Motor neuron (in vitro differentiated cells): ENCODE measurements at regions of chr12 and their contacts with region 1.

Region 1: DNA sequence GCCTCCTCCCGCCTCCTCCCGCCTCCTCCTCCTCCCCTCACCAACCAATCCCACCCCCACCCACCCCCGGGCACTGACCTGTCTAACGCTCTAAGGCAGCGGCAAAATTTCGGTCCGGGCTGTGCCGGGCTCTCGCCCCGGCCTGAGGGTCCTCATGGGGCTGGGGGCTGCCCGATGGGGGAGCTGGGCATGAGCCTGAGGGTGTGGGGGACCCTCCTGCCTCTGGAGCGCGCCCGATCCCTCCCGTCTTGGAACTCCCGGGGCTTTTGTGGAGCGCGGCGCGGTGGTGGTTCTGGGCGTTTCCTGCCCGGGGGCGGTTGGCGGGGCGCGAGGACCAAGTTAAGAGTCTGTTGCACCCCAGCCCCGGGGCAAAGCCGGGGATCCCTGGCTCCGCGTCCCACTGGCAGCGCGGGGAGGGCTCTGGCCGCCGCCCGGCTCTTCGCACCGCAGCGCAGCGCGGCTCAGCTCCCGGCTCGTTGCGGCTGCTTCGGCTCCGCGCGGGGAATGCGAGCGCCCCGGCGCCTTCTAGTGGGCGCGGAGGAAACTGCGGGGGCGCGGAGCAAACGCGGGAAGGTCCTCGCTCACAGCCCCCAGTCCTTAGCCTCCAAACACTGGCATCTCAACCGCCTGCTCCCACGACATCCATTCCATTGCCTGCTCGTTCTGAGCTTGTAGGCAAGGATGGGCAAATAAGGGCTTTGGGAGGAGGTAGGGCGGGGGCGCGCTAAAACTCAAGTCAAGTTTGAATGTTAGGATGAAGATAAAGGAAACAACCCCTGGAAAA is at the start of gene B4GALNT1:
- ATAC-seq: peak; percentile 79 to 91 (median 82)
- H3K4me3 ChIP-seq: peak within 1 kb of the TSS; percentile 48 to 83 (median 74)
- H3K27ac ChIP-seq: peak within 1 kb of the TSS; percentile 69 to 83
- H3K4me1 ChIP-seq: peaks cover 10 to 14% of the 10 kb centered on the region in 2 donors
- total RNA-seq, gene B4GALNT1: 0.61 to 34.3 (median 19.4) TPM

Region 2: GRCh38 chr12:57693659-57694458 is 61.0 kb after region 1 on chr12 and contains the start of gene OS9:
- in situ Hi-C with region 1: loop called in 1 of 9 experiments (anchors 10 kb)
- ATAC-seq: peak; percentile 96 to 98 (median 98)
- H3K4me3 ChIP-seq: peak within 1 kb of the TSS; percentile 66 to 88 (median 71)
- H3K27ac ChIP-seq: peak within 1 kb of the TSS; percentile 79 to 81
- H3K4me1 ChIP-seq: peaks cover 4 to 5% of the 10 kb centered on the region in 2 donors
- total RNA-seq, gene OS9: 94.0 to 297 (median 134) TPM